ENCODE measurements at regions of chr17 and their contacts with region 1.

Region 1: DNA sequence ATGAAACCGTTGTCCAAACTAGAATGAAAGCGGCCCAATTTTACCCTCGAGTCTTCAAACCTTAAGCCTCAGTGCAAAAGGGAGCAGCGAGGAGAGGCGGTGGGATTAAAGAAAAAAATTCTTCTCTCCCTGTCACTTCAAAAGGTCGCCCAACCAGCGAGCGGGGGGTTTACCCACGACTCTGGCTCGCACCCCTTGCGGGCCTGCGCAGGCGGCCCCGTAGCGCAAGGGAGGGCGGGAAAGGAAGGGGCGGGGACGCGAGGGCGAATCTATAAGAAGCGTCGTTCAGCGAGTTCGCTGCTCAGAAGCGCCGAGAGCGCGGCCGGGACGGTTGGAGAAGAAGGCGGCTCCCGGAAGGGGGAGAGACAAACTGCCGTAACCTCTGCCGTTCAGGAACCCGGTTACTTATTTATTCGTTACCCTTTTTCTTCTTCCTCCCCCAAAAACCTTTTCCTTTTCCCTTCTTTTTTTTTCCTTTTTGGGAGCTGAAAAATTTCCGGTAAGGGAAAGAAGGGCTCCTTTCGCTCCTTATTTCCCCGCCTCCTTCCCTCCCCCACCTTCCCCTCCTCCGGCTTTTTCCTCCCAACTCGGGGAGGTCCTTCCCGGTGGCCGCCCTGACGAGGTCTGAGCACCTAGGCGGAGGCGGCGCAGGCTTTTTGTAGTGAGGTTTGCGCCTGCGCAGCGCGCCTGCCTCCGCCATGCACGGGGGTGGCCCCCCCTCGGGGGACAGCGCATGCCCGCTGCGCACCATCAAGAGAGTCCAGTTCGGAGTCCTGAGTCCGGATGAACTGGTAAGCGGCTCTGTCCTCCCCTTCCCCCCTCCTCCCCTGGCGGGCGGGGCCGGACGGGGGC is at the start of gene POLR2A:
- DNase-seq: peak; percentile 96 to 100 (median 98)
- ATAC-seq: peak; percentile 66
- H3K4me3 ChIP-seq: peak within 1 kb of the TSS; percentile 87
- H3K4me3 Mint-ChIP-seq: peak within 1 kb of the TSS; percentile 94
- H3K27ac ChIP-seq: peak within 1 kb of the TSS; percentile 99
- H3K27ac Mint-ChIP-seq: peak within 1 kb of the TSS; percentile 99
- H3K4me1 ChIP-seq: peaks cover 73% of the 10 kb centered on the region
- H3K4me1 Mint-ChIP-seq: peaks cover 72% of the 10 kb centered on the region
- H3K27me3 ChIP-seq: no peaks in the 10 kb centered on the region
- H3K27me3 Mint-ChIP-seq: no peaks in the 10 kb centered on the region
- CTCF ChIP-seq: no peak
- total RNA-seq, gene POLR2A: 491 to 501 TPM

Region 2: GRCh38 chr17:7035591-7036368 is 448.5 kb before region 1 on chr17 and contains the start of gene SLC16A13:
- CTCF ChIA-PET with region 1: no interaction called
- POLR2A ChIA-PET with region 1: no interaction called
- intact Hi-C with region 1: loop called in 1 of 2 experiments (anchors 5 kb)
- DNase-seq: peak; percentile 94 to 100 (median 98)
- ATAC-seq: peak; percentile 90
- H3K4me3 ChIP-seq: peak within 1 kb of the TSS; percentile 99
- H3K4me3 Mint-ChIP-seq: peak within 1 kb of the TSS; percentile 91
- H3K27ac ChIP-seq: peak within 1 kb of the TSS; percentile 84 to 93
- H3K27ac Mint-ChIP-seq: peak within 1 kb of the TSS; percentile 99
- H3K4me1 ChIP-seq: peaks cover 57% of the 10 kb centered on the region
- H3K4me1 Mint-ChIP-seq: peaks cover 63% of the 10 kb centered on the region
- H3K27me3 ChIP-seq: no peaks in the 10 kb centered on the region
- H3K27me3 Mint-ChIP-seq: no peaks in the 10 kb centered on the region
- CTCF ChIP-seq: no peak
- total RNA-seq, gene SLC16A13: 2.3 to 2.4 TPM

Region 3: DNA sequence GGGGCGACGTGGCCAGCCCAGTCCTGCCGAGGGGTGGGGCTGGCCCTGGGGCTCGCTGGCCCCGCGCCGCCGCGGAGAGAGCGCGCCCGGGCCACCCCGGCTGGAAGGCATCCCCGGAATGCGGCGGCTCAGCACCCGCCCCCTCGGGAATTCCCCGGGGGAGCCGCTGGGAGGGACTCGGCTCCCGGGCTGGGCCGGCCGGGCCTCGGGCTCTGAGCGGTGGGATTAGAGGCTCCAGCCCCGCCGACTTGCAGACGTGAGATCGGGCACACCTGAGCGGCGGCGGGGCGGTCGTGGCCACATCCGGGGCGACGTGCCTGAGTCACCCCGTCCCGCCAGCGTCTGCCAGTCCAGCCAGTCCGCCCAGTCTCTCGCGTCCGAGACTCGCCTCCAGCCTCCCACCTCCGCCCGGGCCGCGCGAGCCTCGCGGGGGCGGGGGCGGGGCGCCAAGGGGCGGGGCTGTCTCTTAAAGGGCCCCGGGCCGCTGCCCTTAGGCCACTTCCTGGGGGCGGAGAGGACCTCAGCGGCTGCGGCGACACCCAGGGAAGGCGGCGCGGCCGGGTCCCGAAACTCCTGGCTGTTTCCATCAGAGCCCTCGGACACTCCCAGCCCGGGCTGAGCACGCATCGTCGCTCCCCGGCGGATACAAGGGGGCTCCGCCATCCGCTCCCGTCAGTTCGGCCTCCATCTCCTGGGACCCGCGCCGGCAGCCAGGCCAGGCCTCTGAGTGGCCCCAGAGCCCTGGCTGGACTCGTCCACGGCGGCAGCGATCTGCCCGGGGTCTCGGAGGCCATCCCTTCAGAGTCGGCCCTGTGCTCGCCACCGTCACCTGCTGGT is 132.4 kb before region 1 on chr17 and contains the start of gene KCTD11:
- CTCF ChIA-PET with region 1: interaction called, 6 read pairs
- POLR2A ChIA-PET with region 1: interaction called, 10 read pairs
- intact Hi-C with region 1: loop called (anchors 5 kb)
- DNase-seq: peak; percentile 45 to 91 (median 70)
- ATAC-seq: peak; percentile 58
- H3K4me3 ChIP-seq: peak within 1 kb of the TSS; percentile 66
- H3K4me3 Mint-ChIP-seq: peak within 1 kb of the TSS; percentile 90
- H3K27ac ChIP-seq: peak within 1 kb of the TSS; percentile 69 to 75
- H3K27ac Mint-ChIP-seq: peak within 1 kb of the TSS; percentile 86
- H3K4me1 ChIP-seq: peaks cover 59% of the 10 kb centered on the region
- H3K4me1 Mint-ChIP-seq: peaks cover 49% of the 10 kb centered on the region
- H3K27me3 ChIP-seq: no peaks in the 10 kb centered on the region
- H3K27me3 Mint-ChIP-seq: no peaks in the 10 kb centered on the region
- CTCF ChIP-seq: no peak
- total RNA-seq, gene KCTD11: 1.3 to 1.6 TPM

Region 4: DNA sequence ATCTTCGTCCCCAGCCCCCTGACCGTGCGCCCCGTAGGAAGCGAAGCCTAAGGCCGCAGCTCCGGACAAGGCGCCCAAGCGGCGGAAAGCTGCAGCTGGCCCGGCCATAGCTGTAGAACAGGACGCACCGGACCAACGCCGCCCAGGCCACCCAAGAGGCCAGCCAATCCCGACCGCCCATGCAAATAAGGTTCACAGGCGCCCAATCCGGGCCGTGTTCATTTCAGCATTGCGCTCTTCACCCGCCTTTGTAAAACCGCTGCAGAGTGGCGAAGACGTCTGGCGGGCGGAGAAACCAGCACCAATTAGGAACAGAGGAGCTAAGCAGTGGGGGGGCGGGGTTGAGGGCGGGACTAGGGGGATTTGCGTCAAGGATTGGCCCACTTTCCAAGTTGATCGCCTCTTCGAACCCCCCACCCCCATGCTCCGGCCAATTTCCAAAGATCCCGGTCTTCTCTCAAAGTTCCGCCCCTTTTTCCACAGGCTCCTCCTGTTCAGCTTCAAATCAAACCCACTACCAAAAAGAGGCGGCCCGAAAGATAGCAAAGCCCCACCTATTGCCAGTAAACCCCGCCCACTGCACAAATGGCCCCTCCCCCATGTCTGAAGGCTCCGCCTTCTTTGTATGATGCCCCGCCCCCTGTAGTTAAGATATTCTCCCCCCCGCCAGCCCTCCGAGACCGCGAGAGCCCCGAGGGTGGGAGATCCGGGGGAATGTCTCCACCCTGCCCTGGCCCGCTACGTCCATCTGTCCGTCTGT is 80.1 kb before region 1 on chr17 and contains the start of gene TMEM256:
- CTCF ChIA-PET with region 1: no interaction called
- POLR2A ChIA-PET with region 1: interaction called, 23 read pairs
- intact Hi-C with region 1: loop called (anchors 1 to 5 kb)
- DNase-seq: peak; percentile 90 to 99 (median 94)
- ATAC-seq: peak; percentile 88
- H3K4me3 ChIP-seq: peak within 1 kb of the TSS; percentile 77
- H3K4me3 Mint-ChIP-seq: peak within 1 kb of the TSS; percentile 98
- H3K27ac ChIP-seq: peak within 1 kb of the TSS in 1 of 2 donors; percentile 82
- H3K27ac Mint-ChIP-seq: peak within 1 kb of the TSS; percentile 87
- H3K4me1 ChIP-seq: peaks cover 36% of the 10 kb centered on the region
- H3K4me1 Mint-ChIP-seq: peaks cover 31% of the 10 kb centered on the region
- H3K27me3 ChIP-seq: peaks cover 0 to 5% of the 10 kb centered on the region in 2 experiments
- H3K27me3 Mint-ChIP-seq: no peaks in the 10 kb centered on the region
- CTCF ChIP-seq: no peak
- total RNA-seq, gene TMEM256: 29.0 to 29.4 TPM

Region 5: GRCh38 chr17:7462474-7463371 is 21.6 kb before region 1 on chr17:
- CTCF ChIA-PET with region 1: no interaction called
- POLR2A ChIA-PET with region 1: interaction called, 137 read pairs
- intact Hi-C with region 1: no loop called
- DNase-seq: peak in 1 of 14 experiments; percentile 19
- ATAC-seq: no peak
- H3K4me3 ChIP-seq: no peak overlapping the region
- H3K4me3 Mint-ChIP-seq: no peak overlapping the region
- H3K27ac ChIP-seq: no peak overlapping the region
- H3K27ac Mint-ChIP-seq: no peak overlapping the region
- H3K4me1 ChIP-seq: peaks cover 1% of the 10 kb centered on the region
- H3K4me1 Mint-ChIP-seq: peaks cover under 1% of the 10 kb centered on the region
- H3K27me3 ChIP-seq: no peaks in the 10 kb centered on the region
- H3K27me3 Mint-ChIP-seq: no peaks in the 10 kb centered on the region
- CTCF ChIP-seq: no peak

Region 6: GRCh38 chr17:7583253-7584109 is 99.2 kb after region 1 on chr17 and contains the start of gene MPDU1:
- CTCF ChIA-PET with region 1: no interaction called
- POLR2A ChIA-PET with region 1: interaction called, 31 read pairs
- intact Hi-C with region 1: no loop called
- DNase-seq: peak; percentile 89 to 98 (median 94)
- ATAC-seq: peak; percentile 85
- H3K4me3 ChIP-seq: peak within 1 kb of the TSS; percentile 86
- H3K4me3 Mint-ChIP-seq: peak within 1 kb of the TSS; percentile 98
- H3K27ac ChIP-seq: peak within 1 kb of the TSS; percentile 78 to 98
- H3K27ac Mint-ChIP-seq: peak within 1 kb of the TSS; percentile 98
- H3K4me1 ChIP-seq: peaks cover 56% of the 10 kb centered on the region
- H3K4me1 Mint-ChIP-seq: peaks cover 52% of the 10 kb centered on the region
- H3K27me3 ChIP-seq: no peaks in the 10 kb centered on the region
- H3K27me3 Mint-ChIP-seq: no peaks in the 10 kb centered on the region
- CTCF ChIP-seq: no peak
- total RNA-seq, gene MPDU1: 12.0 to 12.9 TPM

Measured in CD4-positive, alpha-beta T cell (primary cell).